Posterior vena cava (tissue), 2 donors: ENCODE measurements at regions of chr1 and their contacts with region 1.

Region 1: GRCh38 chr1:22398656-22399420 is 52.8 kb upstream of the ZBTB40 start:
- DNase-seq: no peak

Region 2: DNA sequence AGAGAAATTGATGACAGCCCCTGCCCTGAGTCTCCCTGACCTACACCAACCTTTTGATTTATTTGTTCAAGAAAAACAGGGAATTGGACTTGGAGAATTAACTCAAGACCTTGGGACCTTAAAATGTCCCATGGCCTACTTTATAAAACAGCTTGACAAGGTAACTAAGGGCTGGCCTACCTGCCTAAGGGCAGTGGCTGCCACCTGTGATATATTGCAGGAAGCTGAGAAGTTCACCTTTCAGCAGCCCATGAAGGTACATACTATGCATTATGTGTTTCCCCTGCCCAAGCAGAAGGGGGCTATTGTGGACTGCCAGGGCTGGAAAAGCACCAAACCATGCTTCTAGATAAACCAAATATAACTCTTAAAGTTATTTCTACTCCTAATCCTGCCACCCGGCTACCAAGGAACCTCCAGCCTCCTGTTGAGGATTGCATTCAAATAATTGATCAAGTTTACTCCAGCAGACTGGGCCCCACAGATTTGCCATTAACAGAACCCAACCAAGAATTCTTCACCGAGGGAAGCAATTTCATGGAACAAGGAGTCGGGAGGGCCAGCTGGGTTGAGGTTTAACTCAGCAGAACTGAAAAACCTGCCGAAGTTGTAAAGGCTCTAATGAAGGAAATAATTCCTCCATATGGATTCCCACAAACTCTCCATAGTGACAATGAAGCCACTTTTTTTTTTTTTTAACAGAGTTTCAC is 545.7 kb after region 1 on chr1:
- intact Hi-C with region 1: loop called in 1 of 2 experiments (anchors 5 kb)
- DNase-seq: no peak

Region 3: DNA sequence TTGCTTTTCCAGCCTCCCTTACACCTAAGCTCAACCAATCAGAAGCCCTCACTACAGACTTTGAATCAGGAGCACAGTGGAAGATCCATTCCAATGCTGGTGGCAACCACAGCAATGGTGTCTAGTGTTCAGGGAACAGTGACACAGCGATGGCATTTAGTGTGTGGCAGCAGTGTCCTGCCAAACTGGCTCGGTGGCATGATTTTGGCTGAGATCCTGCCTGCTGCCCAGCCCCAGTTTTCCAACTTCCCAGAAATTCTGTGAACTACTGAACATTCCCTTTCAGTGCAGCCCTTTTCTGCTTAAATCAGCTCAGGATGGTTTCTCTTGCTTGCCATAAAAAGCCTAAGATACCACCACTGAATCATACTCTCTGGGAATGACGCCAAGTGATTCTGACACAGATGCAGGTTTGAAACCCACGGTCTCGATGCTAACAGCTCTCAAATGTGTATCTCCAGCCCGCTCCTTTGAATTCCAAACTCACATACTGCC is 1076.3 kb after region 1 on chr1:
- intact Hi-C with region 1: no loop called
- DNase-seq: no peak